CD4-positive, alpha-beta memory T cell (primary cell): ENCODE measurements at regions of chr16 and their contacts with region 1.

Region 1: GRCh38 chr16:30429678-30430427 is at the start of gene DCTPP1:
- DNase-seq: peak; percentile 95 to 99 (median 98)
- H3K4me3 ChIP-seq: peak within 1 kb of the TSS; percentile 76 to 84
- H3K4me3 Mint-ChIP-seq: peak within 1 kb of the TSS in 1 of 8 donors; percentile 35
- H3K27ac ChIP-seq: peak within 1 kb of the TSS; percentile 72
- H3K27ac Mint-ChIP-seq: peak within 1 kb of the TSS in 2 of 7 donors; percentile 70 to 84
- H3K4me1 ChIP-seq: peaks cover 32% of the 10 kb centered on the region
- H3K4me1 Mint-ChIP-seq: peaks cover 17 to 28% (median 21%) of the 10 kb centered on the region in 4 donors
- H3K27me3 ChIP-seq: no peaks in the 10 kb centered on the region
- H3K27me3 Mint-ChIP-seq: no peaks in the 10 kb centered on the region
- total RNA-seq, gene DCTPP1: 15.0 to 18.0 TPM

Region 2: GRCh38 chr16:30065143-30065850 is 364.6 kb before region 1 on chr16 and contains the start of gene ALDOA:
- CTCF ChIA-PET with region 1: interaction called, 3 read pairs
- POLR2A ChIA-PET with region 1: interaction called, 12 read pairs
- intact Hi-C with region 1: no loop called
- DNase-seq: peak; percentile 94 to 96 (median 94)
- H3K4me3 ChIP-seq: peak within 1 kb of the TSS; percentile 77 to 93
- H3K4me3 Mint-ChIP-seq: peak within 1 kb of the TSS; percentile 98 to 100 (median 99)
- H3K27ac ChIP-seq: peak within 1 kb of the TSS; percentile 94
- H3K27ac Mint-ChIP-seq: peak within 1 kb of the TSS; percentile 95 to 100 (median 97)
- H3K4me1 ChIP-seq: peaks cover 47% of the 10 kb centered on the region
- H3K4me1 Mint-ChIP-seq: peaks cover 17 to 58% (median 33%) of the 10 kb centered on the region in 4 donors
- H3K27me3 ChIP-seq: no peaks in the 10 kb centered on the region
- H3K27me3 Mint-ChIP-seq: no peaks in the 10 kb centered on the region
- total RNA-seq, gene ALDOA: 558 to 563 TPM

Region 3: GRCh38 chr16:30407102-30407803 is 22.6 kb before region 1 on chr16 and contains the start of gene ZNF771:
- CTCF ChIA-PET with region 1: interaction called, 8 read pairs
- POLR2A ChIA-PET with region 1: interaction called, 10 read pairs
- intact Hi-C with region 1: no loop called
- DNase-seq: peak; percentile 76 to 85 (median 81)
- H3K4me3 ChIP-seq: peak within 1 kb of the TSS; percentile 42 to 65
- H3K4me3 Mint-ChIP-seq: peak within 1 kb of the TSS; percentile 91 to 100 (median 97)
- H3K27ac ChIP-seq: peak within 1 kb of the TSS; percentile 59
- H3K27ac Mint-ChIP-seq: peak within 1 kb of the TSS; percentile 88 to 95 (median 93)
- H3K4me1 ChIP-seq: peaks cover 24% of the 10 kb centered on the region
- H3K4me1 Mint-ChIP-seq: peaks cover 19 to 33% (median 24%) of the 10 kb centered on the region in 4 donors
- H3K27me3 ChIP-seq: no peaks in the 10 kb centered on the region
- H3K27me3 Mint-ChIP-seq: no peaks in the 10 kb centered on the region
- total RNA-seq, gene ZNF771: 6.0 to 6.5 TPM

Region 4: DNA sequence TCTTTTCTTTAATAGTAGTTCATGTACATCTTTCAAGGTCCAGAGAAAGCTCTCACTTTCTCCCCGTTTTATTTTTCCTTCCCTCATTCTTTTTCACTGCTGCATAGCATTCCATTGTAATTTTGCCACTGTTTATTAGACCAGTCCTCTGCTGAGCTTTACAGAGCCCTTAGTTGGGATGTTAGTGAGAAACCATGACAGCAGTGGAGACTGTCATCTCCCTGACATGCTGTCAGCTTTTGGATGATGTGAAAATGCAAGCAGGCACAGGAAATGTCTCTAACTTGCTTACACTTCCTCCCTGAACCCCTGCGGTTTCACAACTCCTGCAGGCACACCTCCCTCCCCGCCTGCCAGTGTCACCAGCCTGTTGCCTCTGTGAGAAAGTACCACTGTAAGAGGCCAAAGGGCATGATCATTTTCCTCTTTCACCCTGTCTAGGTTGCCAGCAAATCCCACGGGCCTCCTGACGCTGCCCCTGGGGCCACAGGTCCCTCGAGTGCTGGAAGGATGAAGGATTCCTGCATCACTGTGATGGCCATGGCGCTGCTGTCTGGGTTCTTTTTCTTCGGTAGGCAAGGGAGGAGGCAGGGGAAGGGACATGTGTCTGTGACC is 42.6 kb after region 1 on chr16 and contains the start of gene ITGAL:
- CTCF ChIA-PET with region 1: interaction called, 5 read pairs
- POLR2A ChIA-PET with region 1: interaction called, 1,162 read pairs
- intact Hi-C with region 1: loop called (anchors 1 kb)
- DNase-seq: peak; percentile 87 to 97 (median 89)
- H3K4me3 ChIP-seq: peak within 1 kb of the TSS; percentile 77 to 96
- H3K4me3 Mint-ChIP-seq: peak within 1 kb of the TSS; percentile 98 to 99 (median 98)
- H3K27ac ChIP-seq: peak within 1 kb of the TSS; percentile 89
- H3K27ac Mint-ChIP-seq: peak within 1 kb of the TSS; percentile 93 to 97 (median 95)
- H3K4me1 ChIP-seq: peaks cover 67% of the 10 kb centered on the region
- H3K4me1 Mint-ChIP-seq: peaks cover 33 to 75% (median 45%) of the 10 kb centered on the region in 4 donors
- H3K27me3 ChIP-seq: no peaks in the 10 kb centered on the region
- H3K27me3 Mint-ChIP-seq: no peaks in the 10 kb centered on the region
- total RNA-seq, gene ITGAL: 648 to 657 TPM

Region 5: DNA sequence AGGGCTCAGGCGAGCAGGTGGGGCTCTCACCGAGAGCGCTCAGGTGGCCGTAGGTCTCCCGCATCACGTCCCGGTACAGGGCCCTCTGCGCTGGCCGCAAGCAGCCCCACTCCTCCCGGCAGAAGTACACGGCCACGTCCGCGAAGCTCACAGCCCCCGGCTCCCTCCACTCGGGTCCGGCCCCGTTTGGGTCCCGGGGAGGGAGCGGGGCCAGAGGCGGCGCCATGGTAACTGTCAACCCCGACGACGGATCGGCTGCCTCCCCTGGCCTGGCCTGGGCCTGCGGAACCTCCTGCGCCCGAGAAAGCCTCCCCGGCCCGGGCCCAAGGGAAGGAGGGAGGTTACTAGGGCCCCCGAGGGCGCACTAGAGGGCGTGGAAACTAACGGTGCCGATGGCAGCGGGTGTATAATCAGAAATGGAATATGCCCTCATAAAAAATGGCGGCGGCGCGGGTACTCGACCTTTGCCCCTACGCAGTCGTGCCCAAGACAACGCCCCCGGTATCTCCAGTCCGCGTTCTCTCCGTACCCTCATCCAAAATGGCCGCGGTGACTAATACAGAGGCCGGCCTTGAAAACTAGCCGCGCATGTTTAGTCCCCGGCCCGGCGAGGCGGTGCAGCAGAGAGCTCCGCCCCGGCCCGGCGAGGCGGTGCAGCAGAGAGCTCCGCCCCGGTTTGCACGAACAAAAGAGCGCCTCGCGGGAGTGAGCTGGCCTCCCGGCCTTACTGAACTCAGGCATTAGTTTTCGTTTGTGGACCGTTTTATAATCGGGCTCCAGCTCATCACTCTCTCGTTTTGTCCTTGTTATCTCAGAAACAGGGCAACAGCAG is 128.3 kb after region 1 on chr16 and contains the start of gene ZNF764:
- CTCF ChIA-PET with region 1: interaction called, 17 read pairs
- POLR2A ChIA-PET with region 1: interaction called, 9 read pairs
- intact Hi-C with region 1: loop called (anchors 1 kb)
- DNase-seq: peak; percentile 94 to 98 (median 96)
- H3K4me3 ChIP-seq: peak within 1 kb of the TSS; percentile 58 to 75
- H3K4me3 Mint-ChIP-seq: peak within 1 kb of the TSS; percentile 88 to 94 (median 92)
- H3K27ac ChIP-seq: peak within 1 kb of the TSS; percentile 95
- H3K27ac Mint-ChIP-seq: peak within 1 kb of the TSS; percentile 93 to 97 (median 95)
- H3K4me1 ChIP-seq: peaks cover 54% of the 10 kb centered on the region
- H3K4me1 Mint-ChIP-seq: peaks cover 19 to 55% (median 37%) of the 10 kb centered on the region in 4 donors
- H3K27me3 ChIP-seq: no peaks in the 10 kb centered on the region
- H3K27me3 Mint-ChIP-seq: no peaks in the 10 kb centered on the region
- total RNA-seq, gene ZNF764: 28.9 to 29.3 TPM

Region 6: GRCh38 chr16:30609926-30610839 is 180.3 kb after region 1 on chr16 and contains the start of gene ZNF689:
- CTCF ChIA-PET with region 1: interaction called, 11 read pairs
- POLR2A ChIA-PET with region 1: interaction called, 10 read pairs
- intact Hi-C with region 1: no loop called
- DNase-seq: peak; percentile 92 to 98 (median 95)
- H3K4me3 ChIP-seq: peak within 1 kb of the TSS; percentile 71 to 99
- H3K4me3 Mint-ChIP-seq: peak within 1 kb of the TSS; percentile 85 to 96 (median 94)
- H3K27ac ChIP-seq: peak within 1 kb of the TSS; percentile 97
- H3K27ac Mint-ChIP-seq: peak within 1 kb of the TSS; percentile 93 to 98 (median 96)
- H3K4me1 ChIP-seq: peaks cover 21% of the 10 kb centered on the region
- H3K4me1 Mint-ChIP-seq: peaks cover 10 to 18% (median 13%) of the 10 kb centered on the region in 4 donors
- H3K27me3 ChIP-seq: no peaks in the 10 kb centered on the region
- H3K27me3 Mint-ChIP-seq: no peaks in the 10 kb centered on the region
- total RNA-seq, gene ZNF689: 13.1 to 14.5 TPM

Region 7: DNA sequence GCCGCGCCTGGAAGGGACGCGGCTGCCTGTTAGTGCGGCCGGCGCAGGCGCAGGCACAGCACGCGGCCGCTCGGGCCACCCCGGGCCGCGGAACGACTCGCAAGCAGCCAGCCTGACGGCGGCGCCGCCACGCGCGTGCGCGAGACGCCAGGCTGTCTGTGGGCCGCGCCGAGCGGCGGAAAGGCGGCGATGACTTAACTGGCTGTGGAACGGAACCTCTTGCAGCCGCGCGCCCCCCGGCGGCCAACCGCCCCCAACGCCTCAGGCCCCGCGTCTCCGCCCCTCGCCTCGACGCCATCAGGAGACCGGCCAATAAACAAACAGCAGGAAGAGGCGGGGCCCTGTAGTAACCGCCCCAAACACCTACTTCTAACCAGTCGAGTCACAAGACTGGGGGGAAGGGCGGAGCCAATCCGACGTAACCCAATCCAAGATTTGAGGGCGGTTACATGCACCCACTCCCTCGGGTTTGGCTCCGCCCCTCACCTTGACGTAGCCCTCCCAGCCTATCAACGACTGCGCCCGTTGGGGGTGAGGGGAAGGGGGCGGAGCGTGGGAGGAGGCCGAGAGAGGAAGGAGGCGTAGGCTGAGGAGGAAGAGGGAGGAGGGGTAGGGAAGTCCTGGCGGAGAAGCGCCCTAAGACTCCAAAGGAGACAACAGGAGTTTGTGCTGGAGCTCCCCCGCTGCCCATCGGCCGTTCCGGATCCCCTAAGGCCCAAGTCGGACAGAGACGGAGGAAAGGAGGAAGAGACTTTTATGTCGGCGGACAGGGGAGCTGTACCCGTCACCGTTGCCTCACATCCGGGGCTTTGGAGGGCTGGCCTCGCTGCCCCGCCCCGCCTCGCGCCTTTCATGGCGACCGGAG is 228.2 kb after region 1 on chr16 and contains the start of gene FBRS:
- CTCF ChIA-PET with region 1: interaction called, 4 read pairs
- POLR2A ChIA-PET with region 1: interaction called, 8 read pairs
- intact Hi-C with region 1: loop called (anchors 1 kb)
- DNase-seq: peak; percentile 100
- H3K4me3 ChIP-seq: peak within 1 kb of the TSS; percentile 70 to 93
- H3K4me3 Mint-ChIP-seq: peak within 1 kb of the TSS; percentile 92 to 99 (median 96)
- H3K27ac ChIP-seq: peak within 1 kb of the TSS; percentile 99
- H3K27ac Mint-ChIP-seq: peak within 1 kb of the TSS; percentile 98 to 100 (median 100)
- H3K4me1 ChIP-seq: peaks cover 43% of the 10 kb centered on the region
- H3K4me1 Mint-ChIP-seq: peaks cover 25 to 52% (median 39%) of the 10 kb centered on the region in 4 donors
- H3K27me3 ChIP-seq: no peaks in the 10 kb centered on the region
- H3K27me3 Mint-ChIP-seq: no peaks in the 10 kb centered on the region
- total RNA-seq, gene FBRS: 164 to 172 TPM